Left colon (tissue), 2 donors: ENCODE measurements at regions of chr19 and their contacts with region 1.

Region 1: GRCh38 chr19:16266586-16266942 is 58.1 kb upstream of the KLF2 start:
- DNase-seq: no peak
- ATAC-seq: no peak

Region 2: DNA sequence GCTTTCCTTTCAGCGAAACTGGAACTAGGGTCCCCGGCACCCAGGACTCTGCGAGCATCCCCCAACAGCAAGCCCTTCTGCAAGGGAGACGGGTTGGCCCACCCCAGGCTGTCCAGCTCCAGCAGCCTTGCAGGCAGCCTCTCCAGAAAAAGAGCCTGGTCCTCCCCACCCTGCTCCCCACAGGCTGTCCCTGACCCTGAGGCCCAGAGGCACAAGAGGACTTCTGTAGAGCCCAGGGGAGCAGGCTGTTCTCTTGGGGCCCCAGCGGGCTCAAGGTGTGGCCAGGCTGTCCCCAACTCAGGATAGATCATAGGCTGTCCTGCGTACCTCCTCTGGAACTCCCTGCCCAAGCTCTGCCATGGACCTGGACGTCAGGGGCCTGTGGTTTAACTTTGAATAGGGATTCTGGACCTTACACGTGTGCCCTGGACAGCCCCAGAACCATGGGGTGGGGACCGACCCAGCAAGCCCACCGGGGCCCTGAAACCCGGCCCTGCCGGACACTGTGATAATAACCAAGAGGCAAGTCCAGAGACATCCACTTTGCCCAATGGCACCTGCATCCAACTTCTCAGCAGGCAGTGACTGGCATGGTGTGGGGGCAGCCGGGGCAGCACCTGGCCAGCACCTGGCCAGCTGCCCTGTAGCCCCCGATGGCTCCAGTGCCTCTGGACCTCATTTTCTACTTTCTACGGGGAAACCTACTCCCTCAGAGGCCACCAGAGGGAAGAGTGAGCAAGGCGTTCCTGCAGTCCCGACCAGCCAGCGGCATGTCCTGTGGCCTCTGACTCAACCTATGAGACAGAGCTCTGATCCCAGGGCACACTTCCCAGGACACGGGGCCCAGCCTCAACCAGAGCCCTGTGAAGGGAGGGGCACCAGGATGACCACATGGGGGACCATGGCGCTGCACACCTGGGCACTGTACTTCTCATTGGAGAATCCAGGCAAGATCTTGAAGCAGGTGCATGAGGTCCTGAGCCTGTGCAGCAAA is 241.2 kb before region 1 on chr19:
- intact Hi-C with region 1: no loop called
- DNase-seq: peak; percentile 34 to 42
- ATAC-seq: peak; percentile 86

Region 3: GRCh38 chr19:16315825-16316505 is 49.4 kb after region 1 on chr19:
- intact Hi-C with region 1: no loop called
- DNase-seq: no peak
- ATAC-seq: no peak

Region 4: DNA sequence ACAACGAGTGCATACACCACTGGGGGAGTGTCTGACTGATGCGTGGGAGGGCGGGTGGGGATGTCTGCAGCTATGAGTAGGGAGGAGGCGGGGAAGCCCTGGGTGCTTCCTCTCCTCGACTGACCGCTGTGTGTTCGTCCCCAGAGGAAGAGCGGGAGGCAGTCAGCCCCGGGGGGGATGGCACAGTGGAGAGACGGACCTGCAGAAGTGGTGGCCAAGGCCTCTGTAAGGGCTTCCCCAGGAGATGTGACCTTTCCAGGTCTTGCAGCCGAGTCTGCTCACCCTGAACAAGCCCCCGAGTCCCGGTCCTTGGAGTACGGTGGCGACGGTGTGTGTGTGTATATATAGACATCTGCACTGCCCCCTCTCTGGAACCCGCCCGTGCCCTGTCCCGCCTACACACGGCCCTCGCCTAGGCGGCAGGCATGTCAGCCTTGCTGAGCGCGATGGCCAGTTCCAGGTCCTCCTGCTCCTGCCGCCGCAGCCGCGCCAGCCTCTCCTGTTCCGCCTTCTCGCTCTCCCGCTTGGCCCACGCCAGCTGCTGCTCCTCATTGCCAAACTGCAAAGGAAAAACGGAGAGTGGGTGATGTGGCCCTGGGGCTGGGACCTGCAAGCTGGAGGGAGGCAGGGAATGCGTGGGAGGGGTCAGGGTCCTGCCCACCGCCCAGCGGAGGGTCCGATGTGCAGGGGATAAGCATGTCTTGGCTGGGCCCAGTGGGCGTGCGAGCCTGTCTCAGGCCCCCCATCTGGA is 88.9 kb after region 1 on chr19:
- intact Hi-C with region 1: loop called in 1 of 2 experiments (anchors 5 kb)
- DNase-seq: no peak
- ATAC-seq: peak; percentile 29